Activated B cell treated with CpG ODN at 0.5 μM for 24 hours (primary cell): ENCODE measurements at regions of chr2 and their contacts with region 1.

Region 1: DNA sequence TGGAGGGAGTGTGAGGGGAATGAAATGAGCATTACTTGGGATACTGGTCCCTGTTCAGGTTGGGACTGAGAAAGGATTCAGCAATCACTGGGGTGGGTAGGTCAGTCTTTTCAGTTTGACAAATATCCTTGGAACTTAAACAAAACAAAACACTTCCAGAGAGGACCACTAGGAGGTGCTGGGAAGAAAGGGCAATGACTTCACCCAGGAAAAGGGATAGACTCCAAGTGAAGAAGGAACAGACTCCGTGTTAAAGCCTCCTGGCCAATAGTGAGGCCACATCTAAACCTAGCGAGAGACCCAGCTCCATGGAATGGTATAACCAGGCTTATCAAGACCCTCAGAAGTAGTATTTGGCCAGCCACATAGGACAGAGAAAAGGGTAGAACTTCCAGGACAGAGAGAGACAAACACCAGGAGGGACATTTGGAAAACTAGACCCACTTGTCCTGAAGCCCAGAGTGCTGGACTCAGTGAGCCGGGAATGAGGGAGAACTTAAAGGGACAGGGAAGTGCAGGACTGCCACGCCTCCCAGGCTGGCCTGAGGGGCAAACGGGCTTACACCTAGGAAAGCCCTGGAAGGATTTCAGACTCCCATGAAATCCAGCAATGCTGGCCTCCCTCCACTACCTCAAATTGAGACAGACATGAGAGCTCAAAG is 19.6 kb upstream of the KCNG3 start:
- DNase-seq: no peak
- ATAC-seq: no peak
- H3K4me3 Mint-ChIP-seq: no peak overlapping the region
- H3K27ac Mint-ChIP-seq: peak overlapping the region; percentile 19
- H3K4me1 Mint-ChIP-seq: peaks cover 6% of the 10 kb centered on the region
- H3K27me3 Mint-ChIP-seq: peaks cover 6% of the 10 kb centered on the region
- CTCF ChIP-seq: no peak

Region 2: GRCh38 chr2:42547014-42547413 is 33.6 kb after region 1 on chr2:
- CTCF ChIA-PET with region 1: no interaction called
- POLR2A ChIA-PET with region 1: no interaction called
- intact Hi-C with region 1: no loop called
- DNase-seq: no peak
- ATAC-seq: peak; percentile 66
- H3K4me3 Mint-ChIP-seq: peak overlapping the region; percentile 62
- H3K27ac Mint-ChIP-seq: peak overlapping the region; percentile 61
- H3K4me1 Mint-ChIP-seq: peaks cover 8% of the 10 kb centered on the region
- H3K27me3 Mint-ChIP-seq: no peaks in the 10 kb centered on the region
- CTCF ChIP-seq: no peak

Region 3: DNA sequence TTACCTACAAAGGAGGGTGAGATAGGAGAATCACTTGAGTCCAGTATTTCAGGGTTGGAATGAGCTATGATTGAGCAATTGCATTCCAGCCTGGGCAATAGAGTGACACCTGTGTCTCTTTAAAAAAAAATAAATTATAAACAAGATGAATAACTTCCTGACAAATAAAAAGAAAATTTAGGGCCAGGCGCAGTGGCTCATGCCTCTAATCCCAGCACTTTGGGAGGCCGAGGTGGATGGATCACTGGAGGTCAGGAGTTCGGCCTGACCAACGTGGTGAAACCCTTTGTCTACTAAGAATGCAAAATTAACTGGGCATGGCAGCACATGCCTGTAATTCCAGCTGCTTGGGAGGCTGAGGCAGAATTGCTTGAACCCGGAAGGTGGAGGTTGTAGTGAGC is 72.4 kb after region 1 on chr2:
- CTCF ChIA-PET with region 1: no interaction called
- POLR2A ChIA-PET with region 1: no interaction called
- intact Hi-C with region 1: no loop called
- DNase-seq: no peak
- ATAC-seq: no peak
- H3K4me3 Mint-ChIP-seq: no peak overlapping the region
- H3K27ac Mint-ChIP-seq: no peak overlapping the region
- H3K4me1 Mint-ChIP-seq: peaks cover 11% of the 10 kb centered on the region
- H3K27me3 Mint-ChIP-seq: no peaks in the 10 kb centered on the region
- CTCF ChIP-seq: no peak

Region 4: GRCh38 chr2:42770288-42771131 is 257.1 kb after region 1 on chr2:
- CTCF ChIA-PET with region 1: interaction called, 3 read pairs
- POLR2A ChIA-PET with region 1: no interaction called
- intact Hi-C with region 1: loop called (anchors 5 kb)
- DNase-seq: no peak
- ATAC-seq: peak; percentile 69
- H3K4me3 Mint-ChIP-seq: no peak overlapping the region
- H3K27ac Mint-ChIP-seq: no peak overlapping the region
- H3K4me1 Mint-ChIP-seq: peaks cover 5% of the 10 kb centered on the region
- H3K27me3 Mint-ChIP-seq: no peaks in the 10 kb centered on the region
- CTCF ChIP-seq: no peak